ENCODE measurements at regions of chr5 and their contacts with region 1.

Region 1: GRCh38 chr5:157540707-157541446 is 34.7 kb downstream of the ADAM19 start:
- DNase-seq: peak; percentile 37
- ATAC-seq: peak; percentile 91
- H3K4me3 Mint-ChIP-seq: peak overlapping the region; percentile 60
- H3K27ac Mint-ChIP-seq: peak overlapping the region; percentile 92
- H3K4me1 Mint-ChIP-seq: peaks cover 86% of the 10 kb centered on the region
- H3K27me3 Mint-ChIP-seq: no peaks in the 10 kb centered on the region
- CTCF ChIP-seq: no peak

Region 2: DNA sequence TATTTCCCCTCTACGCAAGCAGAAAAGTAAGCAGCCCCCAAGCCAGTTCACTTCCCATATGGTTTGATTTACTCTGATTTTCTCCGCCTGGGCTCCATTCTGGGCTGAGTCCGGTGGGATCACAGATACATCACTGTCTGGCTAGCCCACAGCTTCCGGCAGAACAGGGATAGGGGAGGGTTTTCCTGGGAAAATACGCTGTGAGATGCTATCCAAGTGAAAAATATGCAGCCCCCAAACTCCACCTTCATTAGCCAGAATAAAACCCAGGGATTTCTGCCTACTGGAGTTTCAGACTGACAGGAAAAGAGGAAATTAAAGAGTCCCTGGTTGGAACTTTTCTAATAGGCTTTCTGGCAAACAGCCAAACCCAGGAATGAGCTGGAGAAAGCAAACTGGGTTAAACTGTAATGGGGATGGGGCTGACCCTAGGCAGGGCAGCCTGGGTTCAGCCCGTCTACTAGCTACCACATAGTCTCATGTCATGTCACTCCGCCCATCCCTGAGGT is 97.8 kb before region 1 on chr5:
- CTCF ChIA-PET with region 1: no interaction called
- POLR2A ChIA-PET with region 1: no interaction called
- intact Hi-C with region 1: no loop called
- DNase-seq: no peak
- ATAC-seq: no peak
- H3K4me3 Mint-ChIP-seq: no peak overlapping the region
- H3K27ac Mint-ChIP-seq: no peak overlapping the region
- H3K4me1 Mint-ChIP-seq: no peaks in the 10 kb centered on the region
- H3K27me3 Mint-ChIP-seq: no peaks in the 10 kb centered on the region
- CTCF ChIP-seq: no peak

Region 3: DNA sequence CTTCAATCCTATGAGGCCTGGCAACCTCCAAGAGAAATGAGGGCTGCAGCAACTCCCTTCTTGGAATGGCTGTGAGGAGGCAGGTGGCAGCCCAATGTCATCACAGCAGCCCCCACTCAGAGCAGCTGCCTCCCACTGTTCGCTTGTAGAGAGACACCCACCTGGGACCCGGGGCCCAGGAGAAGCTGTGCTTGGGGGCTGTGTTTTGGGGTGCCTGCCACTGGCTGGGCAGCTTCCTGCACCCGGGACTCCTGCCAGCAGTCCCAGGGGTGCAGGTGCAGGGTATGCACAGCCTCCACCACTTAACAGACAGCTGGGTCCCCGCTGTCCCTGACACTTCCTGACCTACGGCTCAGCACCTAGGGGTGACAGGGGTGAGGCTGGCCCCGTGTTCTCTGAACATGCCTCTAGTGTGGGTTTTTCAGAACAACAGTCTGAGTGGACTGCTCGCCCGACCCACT is 54.6 kb before region 1 on chr5:
- CTCF ChIA-PET with region 1: interaction called, 3 read pairs
- POLR2A ChIA-PET with region 1: interaction called, 25 read pairs
- intact Hi-C with region 1: loop called (anchors 2 kb)
- DNase-seq: no peak
- ATAC-seq: peak; percentile 33
- H3K4me3 Mint-ChIP-seq: peak overlapping the region; percentile 56
- H3K27ac Mint-ChIP-seq: peak overlapping the region; percentile 95
- H3K4me1 Mint-ChIP-seq: peaks cover 86% of the 10 kb centered on the region
- H3K27me3 Mint-ChIP-seq: no peaks in the 10 kb centered on the region
- CTCF ChIP-seq: no peak

Region 4: GRCh38 chr5:157520911-157521703 is 19.8 kb before region 1 on chr5:
- CTCF ChIA-PET with region 1: no interaction called
- POLR2A ChIA-PET with region 1: interaction called, 21 read pairs
- intact Hi-C with region 1: loop called (anchors 1 kb)
- DNase-seq: no peak
- ATAC-seq: no peak
- H3K4me3 Mint-ChIP-seq: peak overlapping the region; percentile 47
- H3K27ac Mint-ChIP-seq: peak overlapping the region; percentile 93
- H3K4me1 Mint-ChIP-seq: peaks cover 89% of the 10 kb centered on the region
- H3K27me3 Mint-ChIP-seq: no peaks in the 10 kb centered on the region
- CTCF ChIP-seq: no peak

Region 5: GRCh38 chr5:157558041-157558595 is 17.2 kb after region 1 on chr5:
- CTCF ChIA-PET with region 1: no interaction called
- POLR2A ChIA-PET with region 1: interaction called, 20 read pairs
- intact Hi-C with region 1: loop called (anchors 1 kb)
- DNase-seq: no peak
- ATAC-seq: no peak
- H3K4me3 Mint-ChIP-seq: no peak overlapping the region
- H3K27ac Mint-ChIP-seq: peak overlapping the region; percentile 83
- H3K4me1 Mint-ChIP-seq: peaks cover 90% of the 10 kb centered on the region
- H3K27me3 Mint-ChIP-seq: no peaks in the 10 kb centered on the region
- CTCF ChIP-seq: no peak

Measured in activated B cell treated with CpG ODN at 0.5 μM for 24 hours (primary cell).